Heart right ventricle (tissue), 16 donors: ENCODE measurements at regions of chr13 and their contacts with region 1.

Region 1: GRCh38 chr13:27283906-27284493 is 13.4 kb downstream of the RASL11A start:
- DNase-seq: no peak
- ATAC-seq: peak in 7 of 8 donors; percentile 49 to 81 (median 78)
- H3K4me3 ChIP-seq: no peak overlapping the region
- H3K27ac ChIP-seq: no peak overlapping the region
- H3K4me1 ChIP-seq: no peaks in the 10 kb centered on the region
- H3K27me3 ChIP-seq: peaks cover 0 to 4% (median 0%) of the 10 kb centered on the region in 7 donors
- CTCF ChIP-seq: peak in 8 of 9 donors; percentile 9 to 62 (median 50)

Region 2: DNA sequence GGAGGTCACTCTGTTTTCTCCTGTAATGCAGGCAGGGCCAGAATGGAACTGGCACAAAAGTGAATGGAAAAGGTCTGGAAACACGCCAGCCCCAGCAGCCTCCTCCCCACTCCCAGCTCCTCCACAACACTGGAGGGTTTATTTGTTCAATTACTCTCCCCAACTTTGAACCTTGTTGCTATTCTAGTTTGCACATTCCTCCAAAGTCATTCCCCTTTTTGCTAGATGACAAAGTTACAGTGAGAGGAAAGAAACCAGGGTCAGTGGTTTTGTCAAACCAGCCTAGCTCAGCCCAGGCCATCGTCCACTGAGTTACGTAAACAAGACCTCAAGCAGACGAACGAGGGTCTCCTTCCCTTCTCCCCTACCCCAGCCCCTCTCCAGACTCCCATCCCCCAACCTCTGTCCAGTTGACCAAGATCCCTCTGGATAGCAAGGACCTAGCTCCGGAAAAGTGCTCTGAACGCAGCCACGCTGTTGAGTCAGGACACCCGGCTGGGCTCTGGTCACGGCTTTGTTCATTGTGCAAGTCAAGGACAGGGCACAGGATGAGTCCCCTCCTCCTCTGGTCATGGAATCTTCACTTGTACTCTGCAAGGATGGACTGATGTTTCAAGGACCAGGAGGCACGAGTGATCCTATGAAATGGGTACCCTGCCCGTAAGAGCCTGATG is 292.4 kb before region 1 on chr13:
- intact Hi-C with region 1: loop called in 4 of 10 experiments (anchors 5 kb)
- DNase-seq: no peak
- ATAC-seq: peak in 5 of 8 donors; percentile 27 to 60 (median 36)
- H3K4me3 ChIP-seq: no peak overlapping the region
- H3K27ac ChIP-seq: no peak overlapping the region
- H3K4me1 ChIP-seq: peaks cover 0 to 20% (median 0%) of the 10 kb centered on the region in 9 donors
- H3K27me3 ChIP-seq: no peaks in the 10 kb centered on the region
- CTCF ChIP-seq: no peak

Region 3: DNA sequence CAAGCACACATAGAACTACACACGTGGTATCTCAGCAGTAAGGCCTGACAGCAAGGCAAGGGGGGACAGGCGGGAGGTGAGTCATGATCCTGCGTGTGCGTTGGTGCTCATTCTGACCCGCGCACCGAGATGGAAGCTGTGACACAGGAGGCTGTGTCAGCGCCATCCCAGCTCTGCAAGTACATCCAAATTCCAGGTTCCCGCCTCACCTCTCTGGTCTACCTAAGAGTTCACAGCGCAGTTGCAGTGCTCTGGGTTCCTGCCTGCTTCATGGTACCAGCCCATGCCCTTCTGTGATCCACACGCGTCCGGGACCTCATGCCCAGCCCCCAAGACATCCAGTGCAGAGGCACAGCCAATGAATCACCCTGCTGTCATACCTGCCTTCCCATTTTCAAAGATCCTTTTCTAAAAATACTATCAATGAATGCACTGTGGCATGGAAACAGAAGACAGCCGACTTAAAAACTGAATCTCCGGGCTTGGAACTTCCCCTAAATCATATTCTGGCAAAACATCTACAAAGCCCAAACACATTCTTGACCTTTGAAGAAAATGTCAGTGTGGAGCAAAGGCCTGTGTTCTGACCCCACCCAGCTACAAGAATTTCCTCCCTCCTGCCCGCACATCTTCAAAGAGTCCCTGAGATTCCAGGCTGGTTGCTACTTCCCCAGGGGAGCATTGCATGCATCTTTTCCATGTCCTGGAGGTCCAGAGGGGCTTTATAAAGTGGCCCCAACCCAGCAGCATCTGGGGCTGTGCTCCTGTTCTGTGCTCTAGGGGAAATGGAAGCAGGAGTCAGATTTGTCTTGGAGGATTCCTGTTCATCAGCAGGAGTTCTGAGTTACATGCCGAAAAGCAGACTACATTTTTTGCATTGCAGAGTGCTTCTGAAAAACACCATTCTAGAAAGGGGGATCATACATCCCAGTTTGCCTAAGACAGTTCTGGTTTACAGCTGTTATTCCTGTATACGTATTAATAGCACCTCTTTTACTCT is 247.7 kb before region 1 on chr13:
- intact Hi-C with region 1: no loop called
- DNase-seq: no peak
- ATAC-seq: peak in 2 of 8 donors; percentile 28 to 59
- H3K4me3 ChIP-seq: no peak overlapping the region
- H3K27ac ChIP-seq: no peak overlapping the region
- H3K4me1 ChIP-seq: peaks cover 0 to 25% (median 12%) of the 10 kb centered on the region in 9 donors
- H3K27me3 ChIP-seq: peaks cover 0 to 8% (median 0%) of the 10 kb centered on the region in 7 donors
- CTCF ChIP-seq: no peak